Ascending aorta (tissue), 2 donors: ENCODE measurements at regions of chr15 and their contacts with region 1.

Region 1: GRCh38 chr15:49101536-49101935 is 53.9 kb downstream of the COPS2 start:
- DNase-seq: no peak
- H3K4me3 ChIP-seq: no peak overlapping the region
- H3K27ac ChIP-seq: no peak overlapping the region
- H3K4me1 ChIP-seq: no peaks in the 10 kb centered on the region
- H3K27me3 ChIP-seq: no peaks in the 10 kb centered on the region
- CTCF ChIP-seq: no peak

Region 2: DNA sequence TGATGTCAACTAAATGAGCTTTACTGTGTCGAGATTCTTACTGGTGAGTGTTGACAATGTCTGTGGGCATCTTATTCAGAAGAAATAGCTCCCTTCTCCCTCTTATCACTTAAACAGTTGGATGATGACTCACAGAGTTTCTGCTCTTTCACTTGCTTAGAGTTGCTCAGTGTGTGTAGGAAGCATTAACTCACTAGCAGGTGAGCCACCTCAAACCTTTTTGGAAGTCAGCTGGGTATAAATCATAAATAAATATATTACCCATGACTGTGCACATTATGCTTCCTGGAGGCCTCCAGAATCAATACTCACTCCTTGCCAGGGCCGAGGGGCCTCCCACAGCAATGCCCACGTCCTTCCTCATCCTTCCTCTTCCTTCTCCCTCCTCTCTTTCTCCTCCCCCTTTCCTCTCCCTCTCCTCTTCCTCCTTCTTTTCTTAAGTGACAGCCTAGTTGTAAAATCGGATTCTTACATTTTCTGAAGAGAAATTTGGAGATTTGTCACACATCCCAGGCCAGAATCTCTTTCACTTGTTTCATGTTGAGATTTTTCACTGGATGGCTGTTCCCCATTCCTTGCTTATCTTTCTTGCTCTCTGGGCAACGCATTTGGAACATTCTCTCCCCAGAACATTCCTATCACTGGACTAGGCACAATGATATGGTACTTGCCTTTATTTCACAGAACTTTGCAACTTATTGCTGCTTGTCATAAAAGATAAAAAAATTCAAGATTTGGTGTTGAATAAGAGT is 155.3 kb before region 1 on chr15:
- intact Hi-C with region 1: loop called (anchors 5 kb)
- DNase-seq: no peak
- H3K4me3 ChIP-seq: peak overlapping the region in 1 of 2 donors; percentile 13
- H3K27ac ChIP-seq: peak overlapping the region; percentile 66 to 80
- H3K4me1 ChIP-seq: peaks cover 2 to 8% of the 10 kb centered on the region in 2 donors
- H3K27me3 ChIP-seq: no peaks in the 10 kb centered on the region
- CTCF ChIP-seq: no peak